ENCODE measurements at regions of chr9 and their contacts with region 1.

Region 1: GRCh38 chr9:77469515-77470231 is 178.4 kb downstream of the GNA14 start:
- DNase-seq: no peak
- H3K4me3 ChIP-seq: no peak overlapping the region
- H3K27ac ChIP-seq: no peak overlapping the region
- H3K4me1 ChIP-seq: no peaks in the 10 kb centered on the region
- H3K27me3 ChIP-seq: no peaks in the 10 kb centered on the region
- CTCF ChIP-seq: no peak

Region 2: DNA sequence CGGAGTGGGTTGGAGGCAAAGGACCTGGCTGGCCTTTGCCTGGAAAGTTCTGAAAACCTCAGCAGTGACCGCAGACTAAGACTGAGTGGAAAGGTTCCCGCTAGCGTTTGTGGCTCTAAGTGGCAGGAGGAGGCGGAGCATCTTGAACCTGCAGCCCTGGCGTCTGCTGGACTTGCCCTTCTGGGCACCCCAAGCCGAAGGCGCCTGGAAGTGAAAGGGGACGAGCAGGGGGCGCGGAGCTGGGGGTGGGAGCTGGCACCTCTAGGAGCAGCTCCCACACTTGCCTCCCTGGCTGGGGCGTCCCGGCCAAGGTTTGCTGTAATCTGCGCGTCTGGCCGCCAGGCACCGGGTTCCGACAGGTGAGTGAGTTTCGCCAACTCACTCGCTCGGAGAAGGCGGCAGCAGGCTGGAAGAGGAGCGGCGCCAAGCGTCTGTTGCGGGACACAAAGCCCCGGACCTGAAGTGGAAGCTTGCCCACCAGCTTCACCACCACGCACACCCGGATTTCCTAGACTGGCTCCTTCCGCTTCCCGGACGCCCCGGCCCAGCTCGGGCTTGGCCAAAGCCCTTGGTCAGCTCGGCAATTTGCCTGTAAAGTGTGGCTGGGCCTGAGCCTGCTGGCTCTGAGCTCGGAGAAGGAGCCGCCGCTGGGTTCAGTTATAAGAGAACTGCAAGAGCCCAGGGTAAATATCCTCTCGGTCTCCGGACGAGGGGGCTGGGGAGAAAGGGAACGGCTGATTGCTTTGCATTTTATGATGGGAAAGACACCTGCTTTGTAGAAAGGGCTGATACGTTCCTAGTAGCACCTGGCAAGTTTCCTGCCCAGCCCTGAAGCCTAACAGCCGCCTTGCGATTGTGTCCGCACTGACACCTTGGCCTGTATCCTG is 178.8 kb after region 1 on chr9 and contains the start of gene GNA14:
- intact Hi-C with region 1: loop called (anchors 10 kb)
- DNase-seq: peak in 1 of 2 donors; percentile 69
- H3K4me3 ChIP-seq: peak within 1 kb of the TSS; percentile 70 to 71
- H3K27ac ChIP-seq: peak within 1 kb of the TSS in 1 of 2 donors; percentile 49
- H3K4me1 ChIP-seq: peaks cover 0 to 5% of the 10 kb centered on the region in 2 donors
- H3K27me3 ChIP-seq: no peaks in the 10 kb centered on the region
- CTCF ChIP-seq: no peak
- total RNA-seq, gene GNA14: 3.5 TPM

Region 3: DNA sequence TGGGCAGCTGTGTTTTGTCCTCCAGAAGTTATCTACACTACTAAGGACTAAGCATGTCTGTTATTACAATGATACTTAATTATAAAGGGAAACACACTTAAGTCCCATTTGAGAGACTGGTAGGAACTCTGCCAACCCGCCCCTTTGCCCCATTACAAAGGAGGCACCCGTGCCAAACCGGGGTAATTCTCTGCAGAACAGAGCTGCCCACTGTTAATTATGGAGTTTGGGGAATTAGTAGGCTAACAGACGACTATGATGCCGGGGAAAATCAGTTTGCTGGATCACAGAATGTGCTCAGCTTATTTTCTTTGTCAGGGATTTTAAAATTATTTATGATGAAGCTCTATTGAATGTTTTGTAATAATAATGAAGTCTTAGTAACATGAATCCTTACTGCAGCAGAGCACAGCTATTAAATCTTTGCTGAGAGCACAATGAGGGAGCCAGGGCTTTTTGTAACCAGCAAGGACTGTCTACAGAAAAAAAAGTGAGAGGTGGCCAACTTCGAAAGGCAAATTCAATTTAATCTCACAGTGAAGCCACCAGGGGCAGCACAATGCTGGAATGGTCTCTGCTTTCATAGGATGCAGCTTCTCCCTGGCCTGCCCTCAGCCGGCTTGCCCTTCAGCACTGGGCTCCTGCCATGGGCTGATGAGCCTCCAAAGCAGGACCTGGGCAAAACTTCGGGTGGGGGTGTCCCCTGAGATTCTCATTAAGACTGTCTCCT is 427.4 kb after region 1 on chr9:
- intact Hi-C with region 1: no loop called
- DNase-seq: no peak
- H3K4me3 ChIP-seq: no peak overlapping the region
- H3K27ac ChIP-seq: no peak overlapping the region
- H3K4me1 ChIP-seq: peaks cover 0 to 9% of the 10 kb centered on the region in 2 donors
- H3K27me3 ChIP-seq: no peaks in the 10 kb centered on the region
- CTCF ChIP-seq: no peak